CD8-positive, alpha-beta T cell (primary cell): ENCODE measurements at regions of chr7 and their contacts with region 1.

Region 1: GRCh38 chr7:1065263-1066260 is 21.2 kb downstream of the GPR146 start:
- DNase-seq: peak; percentile 69 to 91 (median 83)
- ATAC-seq: peak; percentile 97
- H3K4me3 ChIP-seq: peak overlapping the region; percentile 37 to 42
- H3K4me3 Mint-ChIP-seq: peak overlapping the region; percentile 72
- H3K27ac ChIP-seq: no peak overlapping the region
- H3K27ac Mint-ChIP-seq: no peak overlapping the region
- H3K4me1 ChIP-seq: peaks cover 5% of the 10 kb centered on the region
- H3K4me1 Mint-ChIP-seq: peaks cover 9% of the 10 kb centered on the region
- H3K27me3 ChIP-seq: peaks cover 0 to 4% of the 10 kb centered on the region in 2 experiments
- H3K27me3 Mint-ChIP-seq: no peaks in the 10 kb centered on the region
- CTCF ChIP-seq: peak; percentile 86

Region 2: GRCh38 chr7:985915-986741 is 79.4 kb before region 1 on chr7:
- CTCF ChIA-PET with region 1: interaction called, 366 read pairs
- POLR2A ChIA-PET with region 1: no interaction called
- intact Hi-C with region 1: no loop called
- DNase-seq: no peak
- ATAC-seq: no peak
- H3K4me3 ChIP-seq: no peak overlapping the region
- H3K4me3 Mint-ChIP-seq: no peak overlapping the region
- H3K27ac ChIP-seq: no peak overlapping the region
- H3K27ac Mint-ChIP-seq: no peak overlapping the region
- H3K4me1 ChIP-seq: no peaks in the 10 kb centered on the region
- H3K4me1 Mint-ChIP-seq: no peaks in the 10 kb centered on the region
- H3K27me3 ChIP-seq: peaks cover 0 to 10% of the 10 kb centered on the region in 2 experiments
- H3K27me3 Mint-ChIP-seq: peaks cover 9% of the 10 kb centered on the region
- CTCF ChIP-seq: no peak

Region 3: GRCh38 chr7:1028031-1028770 is 37.4 kb before region 1 on chr7:
- CTCF ChIA-PET with region 1: interaction called, 6 read pairs
- POLR2A ChIA-PET with region 1: no interaction called
- intact Hi-C with region 1: loop called in 1 of 2 experiments (anchors 1 kb)
- DNase-seq: peak; percentile 67 to 90 (median 76)
- ATAC-seq: peak; percentile 72
- H3K4me3 ChIP-seq: peak overlapping the region; percentile 36 to 57
- H3K4me3 Mint-ChIP-seq: peak overlapping the region; percentile 82
- H3K27ac ChIP-seq: peak overlapping the region; percentile 48 to 81
- H3K27ac Mint-ChIP-seq: no peak overlapping the region
- H3K4me1 ChIP-seq: peaks cover 33% of the 10 kb centered on the region
- H3K4me1 Mint-ChIP-seq: peaks cover 34% of the 10 kb centered on the region
- H3K27me3 ChIP-seq: no peaks in the 10 kb centered on the region
- H3K27me3 Mint-ChIP-seq: no peaks in the 10 kb centered on the region
- CTCF ChIP-seq: no peak

Region 4: DNA sequence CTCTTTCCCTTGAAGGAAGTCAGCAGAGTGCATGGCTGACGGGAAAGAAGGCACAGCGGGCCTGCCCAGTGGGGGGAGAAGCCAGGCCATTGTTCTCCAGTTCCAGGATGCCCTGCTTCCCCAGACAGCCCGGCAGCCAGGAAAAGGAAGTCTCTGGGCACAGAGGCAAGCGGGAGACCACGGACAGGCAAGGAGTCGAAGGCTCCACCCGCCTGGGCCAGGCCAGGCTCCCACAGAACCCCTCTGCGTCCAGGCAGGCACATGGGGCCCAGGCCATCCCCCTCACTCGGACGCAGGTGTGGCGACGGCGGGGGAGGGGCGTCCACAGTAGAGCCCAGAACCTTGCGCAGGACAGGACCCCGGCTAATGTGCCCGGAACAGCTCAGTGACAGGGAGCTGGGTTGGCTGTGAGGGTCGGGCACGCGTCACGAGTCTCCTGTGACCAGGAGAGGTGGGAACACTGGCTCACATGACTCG is 12.5 kb before region 1 on chr7:
- CTCF ChIA-PET with region 1: interaction called, 49 read pairs
- POLR2A ChIA-PET with region 1: no interaction called
- intact Hi-C with region 1: no loop called
- DNase-seq: no peak
- ATAC-seq: no peak
- H3K4me3 ChIP-seq: no peak overlapping the region
- H3K4me3 Mint-ChIP-seq: no peak overlapping the region
- H3K27ac ChIP-seq: no peak overlapping the region
- H3K27ac Mint-ChIP-seq: no peak overlapping the region
- H3K4me1 ChIP-seq: peaks cover 41% of the 10 kb centered on the region
- H3K4me1 Mint-ChIP-seq: peaks cover 28% of the 10 kb centered on the region
- H3K27me3 ChIP-seq: no peaks in the 10 kb centered on the region
- H3K27me3 Mint-ChIP-seq: no peaks in the 10 kb centered on the region
- CTCF ChIP-seq: no peak

Region 5: GRCh38 chr7:1159891-1160668 is 94.5 kb after region 1 on chr7 and contains the start of gene ZFAND2A:
- CTCF ChIA-PET with region 1: no interaction called
- POLR2A ChIA-PET with region 1: no interaction called
- intact Hi-C with region 1: no loop called
- DNase-seq: peak; percentile 97 to 99 (median 99)
- ATAC-seq: peak; percentile 98
- H3K4me3 ChIP-seq: peak within 1 kb of the TSS; percentile 98
- H3K4me3 Mint-ChIP-seq: peak within 1 kb of the TSS; percentile 90
- H3K27ac ChIP-seq: peak within 1 kb of the TSS; percentile 96 to 99
- H3K27ac Mint-ChIP-seq: peak within 1 kb of the TSS; percentile 95
- H3K4me1 ChIP-seq: peaks cover 22% of the 10 kb centered on the region
- H3K4me1 Mint-ChIP-seq: peaks cover 27% of the 10 kb centered on the region
- H3K27me3 ChIP-seq: no peaks in the 10 kb centered on the region
- H3K27me3 Mint-ChIP-seq: no peaks in the 10 kb centered on the region
- CTCF ChIP-seq: no peak
- total RNA-seq, gene ZFAND2A: 100 to 105 TPM

Region 6: GRCh38 chr7:1175967-1176851 is 110.6 kb after region 1 on chr7:
- CTCF ChIA-PET with region 1: interaction called, 18 read pairs
- POLR2A ChIA-PET with region 1: no interaction called
- intact Hi-C with region 1: no loop called
- DNase-seq: peak; percentile 54 to 88 (median 78)
- ATAC-seq: peak; percentile 70
- H3K4me3 ChIP-seq: peak overlapping the region; percentile 2 to 10
- H3K4me3 Mint-ChIP-seq: peak overlapping the region; percentile 70
- H3K27ac ChIP-seq: no peak overlapping the region
- H3K27ac Mint-ChIP-seq: no peak overlapping the region
- H3K4me1 ChIP-seq: peaks cover 10% of the 10 kb centered on the region
- H3K4me1 Mint-ChIP-seq: peaks cover 9% of the 10 kb centered on the region
- H3K27me3 ChIP-seq: no peaks in the 10 kb centered on the region
- H3K27me3 Mint-ChIP-seq: peaks cover 8% of the 10 kb centered on the region
- CTCF ChIP-seq: peak; percentile 94